Activated naive CD4-positive, alpha-beta T cell treated with anti-CD3 and anti-CD28 coated beads for 36 hours (primary cell): ENCODE measurements at regions of chrX and their contacts with region 1.

Region 1: DNA sequence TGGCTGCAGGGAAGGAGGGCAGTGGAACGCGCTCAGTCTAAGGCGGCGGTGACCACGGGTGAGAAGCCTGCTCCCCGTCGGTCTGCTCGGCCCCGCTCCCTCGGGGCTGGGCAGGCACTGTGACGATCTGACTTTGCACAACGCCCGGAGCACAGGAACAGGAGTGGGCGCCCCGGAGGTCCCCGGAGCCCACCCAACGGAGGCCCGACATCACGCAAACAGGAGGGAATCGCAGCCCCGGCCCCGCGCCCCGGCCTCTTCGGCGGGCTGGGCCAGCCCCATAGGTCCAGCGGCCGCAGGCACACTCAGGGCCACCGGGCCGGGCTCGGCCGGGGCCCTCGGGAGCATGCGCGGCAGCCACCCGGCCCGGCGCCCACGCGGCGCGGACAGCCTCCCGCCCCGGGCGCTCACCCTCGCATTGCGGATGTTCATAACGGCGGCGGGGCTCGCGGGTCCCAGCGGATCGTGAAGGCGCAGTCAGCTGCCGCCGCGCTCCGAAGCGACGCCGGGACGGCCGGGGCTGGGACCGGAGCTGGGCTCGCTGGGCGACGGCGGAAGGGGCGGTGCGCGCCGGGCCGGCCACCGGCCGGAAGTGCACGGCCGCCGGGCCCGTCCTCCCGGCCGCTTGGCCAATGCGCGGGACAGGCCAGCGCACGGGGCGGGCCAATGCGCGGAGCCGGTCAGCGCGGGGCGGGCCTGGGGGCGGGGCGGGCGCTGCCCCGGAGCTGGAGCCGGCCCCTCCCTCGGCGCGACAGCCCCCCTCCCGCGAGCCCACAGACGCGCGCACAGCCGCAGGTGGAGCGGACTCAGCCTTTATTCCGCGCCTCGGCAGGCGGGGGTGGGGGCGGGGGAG is at the start of gene NAA10:
- DNase-seq: peak; percentile 53
- H3K4me3 Mint-ChIP-seq: peak within 1 kb of the TSS; percentile 80
- H3K27ac Mint-ChIP-seq: peak within 1 kb of the TSS; percentile 69
- H3K4me1 Mint-ChIP-seq: peaks cover 37% of the 10 kb centered on the region
- H3K27me3 Mint-ChIP-seq: no peaks in the 10 kb centered on the region
- total RNA-seq, gene NAA10: 120 to 121 TPM

Region 2: DNA sequence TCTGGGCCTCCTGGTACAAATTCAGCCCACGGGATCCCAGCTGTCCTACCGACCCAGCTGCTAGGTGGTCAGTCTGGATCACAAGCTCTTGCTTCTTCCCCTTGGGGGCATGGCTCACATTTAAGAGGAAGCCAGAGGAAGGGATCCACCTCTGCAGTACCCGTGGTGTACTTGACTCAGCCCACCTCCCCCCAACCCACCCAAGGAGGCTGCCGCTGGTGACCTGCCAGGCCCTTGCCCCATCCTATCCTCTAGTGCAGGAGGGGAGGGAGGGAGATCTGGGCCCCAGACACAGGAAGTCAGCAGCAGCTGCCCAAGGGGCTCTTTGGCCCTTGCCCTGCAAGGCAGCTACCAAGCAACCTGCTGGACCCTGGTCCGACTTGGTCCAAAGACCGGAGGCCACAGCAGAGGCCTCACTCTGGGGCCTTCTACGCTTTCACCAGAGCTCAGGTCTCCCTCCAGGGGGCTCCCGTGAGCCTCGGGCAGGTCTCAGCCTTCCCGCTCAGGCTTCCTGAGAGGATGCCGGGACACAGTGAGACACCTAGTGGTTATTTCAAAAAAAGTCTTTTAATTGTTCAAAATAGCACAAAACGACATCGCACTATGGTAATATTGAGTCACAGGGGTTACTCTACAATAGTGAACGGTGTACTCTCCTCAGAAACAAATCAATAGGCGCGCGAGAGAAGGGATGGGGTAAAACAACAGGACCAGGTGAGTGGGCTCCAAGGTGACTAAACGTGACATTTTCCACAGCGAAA is 12.5 kb after region 1 on chrX:
- CTCF ChIA-PET with region 1: interaction called, 82 read pairs
- intact Hi-C with region 1: loop called (anchors 1 kb)
- DNase-seq: peak; percentile 87
- H3K4me3 Mint-ChIP-seq: no peak overlapping the region
- H3K27ac Mint-ChIP-seq: peak overlapping the region; percentile 76
- H3K4me1 Mint-ChIP-seq: peaks cover 28% of the 10 kb centered on the region
- H3K27me3 Mint-ChIP-seq: no peaks in the 10 kb centered on the region